Caco-2 (cell line): ENCODE measurements at regions of chr16 and their contacts with region 1.

Region 1: GRCh38 chr16:63461248-63461841 is 1425.1 kb upstream of the CDH8 start:
- DNase-seq: peak; percentile 27 to 39
- H3K4me3 ChIP-seq: no peak overlapping the region
- H3K4me3 Mint-ChIP-seq: no peak overlapping the region
- H3K27ac Mint-ChIP-seq: no peak overlapping the region
- H3K4me1 ChIP-seq: no peaks in the 10 kb centered on the region
- H3K4me1 Mint-ChIP-seq: no peaks in the 10 kb centered on the region
- H3K27me3 ChIP-seq: no peaks in the 10 kb centered on the region
- H3K27me3 Mint-ChIP-seq: no peaks in the 10 kb centered on the region
- CTCF ChIP-seq: peak; percentile 45 to 52

Region 2: GRCh38 chr16:63361032-63361624 is 100.2 kb before region 1 on chr16:
- CTCF ChIA-PET with region 1: no interaction called
- POLR2A ChIA-PET with region 1: no interaction called
- intact Hi-C with region 1: loop called (anchors 5 kb)
- DNase-seq: peak; percentile 38 to 56
- H3K4me3 ChIP-seq: no peak overlapping the region
- H3K4me3 Mint-ChIP-seq: no peak overlapping the region
- H3K27ac Mint-ChIP-seq: no peak overlapping the region
- H3K4me1 ChIP-seq: no peaks in the 10 kb centered on the region
- H3K4me1 Mint-ChIP-seq: peaks cover 7% of the 10 kb centered on the region
- H3K27me3 ChIP-seq: no peaks in the 10 kb centered on the region
- H3K27me3 Mint-ChIP-seq: peaks cover 3% of the 10 kb centered on the region
- CTCF ChIP-seq: peak; percentile 67 to 91

Region 3: GRCh38 chr16:64035337-64035736 is 574.0 kb after region 1 on chr16:
- CTCF ChIA-PET with region 1: no interaction called
- POLR2A ChIA-PET with region 1: no interaction called
- intact Hi-C with region 1: loop called (anchors 5 kb)
- DNase-seq: no peak
- H3K4me3 ChIP-seq: no peak overlapping the region
- H3K4me3 Mint-ChIP-seq: no peak overlapping the region
- H3K27ac Mint-ChIP-seq: no peak overlapping the region
- H3K4me1 ChIP-seq: no peaks in the 10 kb centered on the region
- H3K4me1 Mint-ChIP-seq: no peaks in the 10 kb centered on the region
- H3K27me3 ChIP-seq: no peaks in the 10 kb centered on the region
- H3K27me3 Mint-ChIP-seq: no peaks in the 10 kb centered on the region
- CTCF ChIP-seq: no peak